Right ventricle myocardium inferior (tissue), 1 donor: ENCODE measurements at regions of chr3 and their contacts with region 1.

Region 1: DNA sequence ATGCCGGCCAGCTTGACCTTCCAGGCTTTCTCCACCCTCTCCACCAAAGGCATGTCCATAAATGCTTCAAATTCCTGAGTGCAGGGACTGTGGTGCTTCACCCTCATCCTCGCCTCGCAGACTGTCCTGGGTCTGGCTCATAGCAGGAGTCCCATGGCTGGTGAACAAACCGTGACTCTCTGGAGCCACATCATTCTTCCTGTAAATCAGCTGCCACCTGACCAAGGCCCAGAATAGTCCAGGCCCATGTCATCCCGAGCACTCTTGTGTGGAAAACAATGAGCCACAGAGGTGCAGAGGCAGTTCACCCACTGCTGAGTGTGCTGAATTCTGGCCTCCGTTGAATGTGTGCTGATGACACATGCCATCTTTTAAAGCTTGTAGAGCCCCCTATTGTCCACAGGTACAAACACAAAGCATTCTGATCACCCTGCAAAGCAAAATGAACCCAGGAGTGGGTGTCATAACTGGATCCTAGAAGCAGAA is 68.6 kb downstream of the ABHD5 start:
- DNase-seq: no peak
- ATAC-seq: peak; percentile 70

Region 2: DNA sequence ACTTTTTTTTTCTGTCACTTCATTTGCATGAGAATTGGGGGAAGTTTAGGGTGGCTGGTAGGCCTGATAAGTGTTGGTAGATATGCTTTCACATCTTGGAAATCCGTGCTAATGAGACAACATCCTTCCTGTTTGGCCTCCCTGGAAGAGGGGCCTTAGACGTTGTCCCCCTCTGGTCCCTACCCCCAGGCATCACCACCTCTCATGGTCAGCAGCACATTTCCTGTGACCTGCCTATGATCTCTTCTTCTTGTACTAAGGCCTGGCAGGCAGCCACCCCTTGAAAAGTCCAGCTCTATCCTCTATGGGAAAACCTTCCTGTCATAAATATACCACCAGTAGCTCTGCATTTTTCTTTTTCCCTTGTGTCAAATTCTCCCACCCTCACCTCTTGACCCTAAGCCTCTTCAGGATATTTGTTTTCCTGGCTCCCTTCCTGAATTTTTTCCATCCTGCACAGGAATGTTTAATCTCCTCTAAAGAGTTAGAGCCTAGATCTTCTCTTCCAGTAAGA is 365.2 kb before region 1 on chr3:
- intact Hi-C with region 1: no loop called
- DNase-seq: peak; percentile 84
- ATAC-seq: peak; percentile 78

Region 3: DNA sequence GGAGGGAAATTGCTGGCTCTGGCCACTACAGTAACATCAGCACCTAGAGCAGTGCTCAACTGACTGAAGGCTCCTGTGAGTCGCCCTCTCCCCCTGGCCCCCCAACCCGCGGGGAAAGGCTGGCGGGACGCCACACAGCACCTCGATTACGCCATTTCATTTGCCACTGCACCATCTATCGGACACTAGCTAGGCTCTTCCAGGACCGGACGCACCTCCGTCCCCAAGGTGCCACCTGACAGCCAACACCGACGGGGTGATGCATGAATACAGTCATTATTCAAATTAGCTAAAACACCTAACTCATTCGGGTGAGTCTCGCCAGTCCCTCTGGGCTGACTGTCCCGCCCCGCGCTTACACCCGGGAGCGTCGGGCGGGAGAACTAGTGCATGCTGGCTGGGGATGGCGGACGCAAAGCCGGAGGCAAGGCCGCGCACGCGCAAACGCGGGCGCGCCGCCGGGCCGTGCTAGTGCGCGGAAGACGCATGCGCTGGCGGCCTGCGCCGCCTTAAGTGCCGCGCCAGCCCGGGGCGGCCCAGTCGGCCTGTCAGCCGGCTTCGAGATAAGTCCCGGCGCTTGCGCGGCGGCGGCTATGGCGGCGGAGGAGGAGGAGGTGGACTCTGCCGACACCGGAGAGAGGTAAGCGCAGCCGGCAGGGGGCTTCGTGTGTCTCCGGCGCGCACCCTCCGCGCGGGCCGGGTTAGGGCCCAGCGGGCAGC is 68.8 kb before region 1 on chr3 and contains the start of gene ABHD5:
- intact Hi-C with region 1: loop called (anchors 5 kb)
- DNase-seq: peak; percentile 96
- ATAC-seq: peak; percentile 96
- total RNA-seq, gene ABHD5: 25.4 TPM